ENCODE measurements at regions of chr4 and their contacts with region 1.

Region 1: GRCh38 chr4:55819634-55820033 is at the start of gene EXOC1L:
- DNase-seq: no peak
- H3K4me3 ChIP-seq: peak within 1 kb of the TSS in 1 of 4 donors; percentile 23
- H3K27ac ChIP-seq: no peak within 1 kb of the TSS
- H3K4me1 ChIP-seq: no peaks in the 10 kb centered on the region
- H3K27me3 ChIP-seq: peaks cover 3% of the 10 kb centered on the region
- CTCF ChIP-seq: no peak
- EP300 ChIP-seq: no peak
- POLR2A ChIP-seq: no peak
- total RNA-seq, gene EXOC1L: not detected

Region 2: GRCh38 chr4:55395529-55396307 is 423.9 kb before region 1 on chr4 and contains the start of gene TMEM165:
- in situ Hi-C with region 1: no loop called
- intact Hi-C with region 1: no loop called
- DNase-seq: peak; percentile 97
- H3K4me3 ChIP-seq: peak within 1 kb of the TSS; percentile 86 to 99 (median 92)
- H3K27ac ChIP-seq: peak within 1 kb of the TSS; percentile 97 to 100 (median 98)
- H3K4me1 ChIP-seq: peaks cover 6 to 44% (median 32%) of the 10 kb centered on the region in 4 donors
- H3K27me3 ChIP-seq: no peaks in the 10 kb centered on the region
- CTCF ChIP-seq: no peak
- EP300 ChIP-seq: peak; percentile 48
- POLR2A ChIP-seq: peak; percentile 98
- total RNA-seq, gene TMEM165: 79.5 to 215 (median 136) TPM

Region 3: GRCh38 chr4:55635282-55635681 is 184.4 kb before region 1 on chr4:
- in situ Hi-C with region 1: no loop called
- intact Hi-C with region 1: no loop called
- DNase-seq: no peak
- H3K4me3 ChIP-seq: no peak overlapping the region
- H3K27ac ChIP-seq: no peak overlapping the region
- H3K4me1 ChIP-seq: peaks cover 7 to 19% (median 13%) of the 10 kb centered on the region in 4 donors
- H3K27me3 ChIP-seq: peaks cover 65% of the 10 kb centered on the region
- CTCF ChIP-seq: no peak
- EP300 ChIP-seq: no peak
- POLR2A ChIP-seq: no peak

Region 4: GRCh38 chr4:55722132-55722531 is 97.5 kb before region 1 on chr4:
- in situ Hi-C with region 1: loop called in 1 of 4 experiments (anchors 25 kb)
- intact Hi-C with region 1: no loop called
- DNase-seq: no peak
- H3K4me3 ChIP-seq: no peak overlapping the region
- H3K27ac ChIP-seq: no peak overlapping the region
- H3K4me1 ChIP-seq: no peaks in the 10 kb centered on the region
- H3K27me3 ChIP-seq: no peaks in the 10 kb centered on the region
- CTCF ChIP-seq: no peak
- EP300 ChIP-seq: no peak
- POLR2A ChIP-seq: no peak